Caki2 (cell line): ENCODE measurements at regions of chr5 and their contacts with region 1.

Region 1: GRCh38 chr5:142611154-142611553 is 74.7 kb downstream of the FGF1 start:
- DNase-seq: peak; percentile 47

Region 2: DNA sequence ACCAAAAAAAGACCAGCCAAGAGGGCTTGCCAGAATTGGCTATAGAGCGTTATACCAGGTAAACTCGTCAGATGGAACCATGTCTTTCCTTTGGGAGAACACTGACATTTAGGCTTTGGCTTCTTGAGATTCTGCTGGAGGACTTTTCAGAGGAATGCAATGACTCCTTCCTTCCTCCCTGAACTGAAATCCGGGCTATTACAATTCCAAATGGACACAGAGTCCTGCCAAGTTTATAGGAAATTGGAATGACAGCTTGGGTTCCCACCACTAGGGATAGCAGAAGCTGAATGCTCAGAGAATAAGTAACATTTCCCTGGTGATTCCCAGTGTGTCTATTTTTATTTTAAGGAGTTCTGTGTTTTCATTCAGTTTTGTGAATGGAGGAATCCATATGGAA is 68.2 kb before region 1 on chr5:
- in situ Hi-C with region 1: no loop called
- DNase-seq: no peak

Region 3: GRCh38 chr5:142699184-142699720 is 88.1 kb after region 1 on chr5:
- in situ Hi-C with region 1: loop called (anchors 10 kb)
- DNase-seq: peak; percentile 68

Region 4: DNA sequence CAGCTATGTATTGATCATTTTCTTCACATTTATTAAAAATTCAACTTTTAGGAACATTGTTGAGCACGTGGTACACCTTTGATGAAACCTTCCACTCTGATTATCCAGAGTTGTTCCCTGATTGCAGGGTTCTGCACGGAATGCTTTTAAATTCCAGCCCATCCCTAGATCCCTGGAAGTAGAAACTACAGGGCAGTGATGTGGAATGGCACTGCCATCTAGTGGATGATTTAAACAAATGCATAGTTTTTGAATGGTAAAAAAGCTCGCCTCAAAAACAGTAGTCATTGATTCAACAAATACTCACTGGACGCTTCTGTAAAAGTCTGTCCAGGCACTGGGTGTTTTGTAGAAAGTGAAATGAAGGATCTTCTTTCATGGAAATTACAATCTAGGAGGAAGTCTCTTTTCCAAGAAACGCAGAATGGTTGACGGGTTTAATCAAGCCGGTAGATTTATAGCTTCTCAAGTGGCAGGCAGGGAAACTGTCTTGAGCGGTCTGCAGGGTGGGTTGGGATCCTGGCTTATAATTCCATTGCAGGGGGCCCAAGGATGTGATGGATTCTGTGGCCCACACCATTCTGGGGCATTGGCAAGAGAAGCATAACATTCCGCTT is 277.4 kb after region 1 on chr5:
- in situ Hi-C with region 1: loop called (anchors 25 kb)
- DNase-seq: peak; percentile 29